HepG2 (cell line): ENCODE measurements at regions of chr14 and their contacts with region 1.

Region 1: DNA sequence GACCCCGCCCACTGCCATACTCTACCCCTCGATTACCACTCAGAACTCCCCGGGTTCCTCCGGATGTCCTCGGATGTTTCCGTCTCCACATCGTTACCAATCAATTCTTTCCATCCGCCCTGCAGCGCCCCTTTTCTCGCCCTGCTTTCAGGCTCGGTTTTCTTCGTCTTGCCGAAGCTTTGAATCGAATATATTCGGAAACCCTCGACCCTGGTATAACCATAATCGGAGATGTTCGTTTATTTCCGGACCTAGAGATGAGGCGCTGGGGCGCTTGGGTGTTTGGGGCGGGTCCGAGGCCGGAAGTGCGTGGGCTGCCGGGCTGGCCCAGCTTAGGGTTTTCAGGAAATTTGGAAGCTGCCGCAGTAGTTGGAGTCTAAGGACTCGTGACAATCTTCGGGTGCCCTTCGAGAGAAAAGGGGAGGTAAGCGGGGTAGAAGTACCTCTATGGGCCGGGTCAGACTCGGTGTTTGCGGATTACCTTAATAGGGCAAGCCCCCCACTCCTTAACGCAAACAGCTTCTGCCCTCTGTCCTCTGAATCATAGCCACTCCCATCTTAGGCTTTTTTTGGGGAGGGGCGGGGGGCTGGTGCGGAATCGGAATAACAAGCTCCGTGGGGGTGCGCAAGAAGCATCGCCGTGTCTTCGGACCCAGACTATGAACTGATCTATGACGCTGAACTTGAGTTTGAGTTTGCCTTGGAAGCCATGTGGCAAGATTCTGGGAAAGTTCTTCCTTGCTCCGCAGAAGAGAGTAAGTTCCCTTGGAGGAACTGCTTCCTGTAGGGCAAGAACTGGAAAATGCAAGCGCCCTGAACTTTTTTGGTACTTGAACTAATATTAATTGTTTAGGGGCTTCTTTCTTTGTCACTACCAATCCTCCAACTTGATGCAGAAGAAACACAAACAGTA is at the start of gene C14orf119:
- DNase-seq: peak; percentile 100
- ATAC-seq: peak; percentile 92
- H3K4me3 ChIP-seq: peak within 1 kb of the TSS; percentile 71 to 96 (median 95)
- H3K27ac ChIP-seq: peak within 1 kb of the TSS; percentile 89
- H3K4me1 ChIP-seq: peaks cover 37% of the 10 kb centered on the region
- H3K27me3 ChIP-seq: no peaks in the 10 kb centered on the region; a peak in 1 of 5 replicates
- CTCF ChIP-seq: peak; percentile 16; the same call in 1 of the 2 replicates
- EP300 ChIP-seq: no peak; a peak in 2 of 4 replicates
- POLR2A ChIP-seq: peak in 1 of 2 experiments; percentile 55; a peak in 2 of 4 replicates
- RAD21 ChIP-seq: peak; percentile 42; the same call in 1 of the 2 replicates
- total RNA-seq, gene C14orf119: 206 and 299 TPM in 2 replicates

Region 2: DNA sequence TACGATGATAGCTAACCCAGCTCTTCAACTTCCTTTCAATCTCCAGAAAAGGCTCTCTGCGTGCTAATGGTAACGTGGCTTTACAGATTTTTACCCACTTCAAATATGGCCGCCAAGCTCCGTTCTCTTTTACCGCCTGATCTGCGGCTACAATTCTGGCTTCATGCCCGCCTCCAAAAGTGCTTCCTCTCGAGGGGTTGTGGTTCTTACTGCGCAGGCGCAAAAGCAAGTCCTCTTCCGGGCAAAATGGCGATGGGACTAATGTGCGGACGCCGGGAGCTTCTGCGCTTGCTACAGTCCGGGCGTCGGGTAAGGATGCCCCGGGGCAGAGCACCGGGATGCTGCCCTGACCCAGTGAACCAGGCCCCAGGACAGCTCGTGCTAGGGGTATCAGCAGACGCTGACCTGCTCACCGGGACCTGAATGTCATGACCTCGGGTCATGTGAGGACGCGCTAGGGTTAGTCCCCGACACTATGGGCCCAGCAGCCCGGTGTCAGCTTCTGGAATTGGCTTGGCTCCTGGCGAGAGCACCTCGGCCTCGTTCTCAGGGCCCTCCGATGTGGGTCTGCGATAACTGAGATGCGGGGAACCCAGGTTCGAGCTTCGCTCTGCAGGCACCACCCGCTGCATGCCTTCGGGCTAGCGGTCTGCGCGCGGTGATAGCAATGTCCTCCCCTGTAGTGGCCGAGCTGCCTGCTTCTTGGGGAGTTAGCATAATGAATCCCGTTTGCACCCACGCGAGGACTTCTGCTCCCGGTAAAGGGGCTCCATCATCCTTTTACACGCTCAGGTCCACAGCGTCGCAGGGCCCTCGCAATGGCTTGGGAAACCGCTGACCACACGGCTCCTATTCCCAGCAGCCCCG is 328.8 kb before region 1 on chr14 and contains the start of gene OXA1L:
- CTCF ChIA-PET with region 1: no interaction called
- POLR2A ChIA-PET with region 1: interaction called, 20 read pairs
- in situ Hi-C with region 1: no loop called
- intact Hi-C with region 1: no loop called
- DNase-seq: peak; percentile 100
- ATAC-seq: peak; percentile 90
- H3K4me3 ChIP-seq: peak within 1 kb of the TSS; percentile 72 to 96 (median 83)
- H3K27ac ChIP-seq: peak within 1 kb of the TSS; percentile 74
- H3K4me1 ChIP-seq: peaks cover 22% of the 10 kb centered on the region
- H3K27me3 ChIP-seq: no peaks in the 10 kb centered on the region; a peak in 1 of 5 replicates
- CTCF ChIP-seq: peak; percentile 37
- EP300 ChIP-seq: peak in 1 of 2 experiments; percentile 52; a peak in 1 of 4 replicates
- POLR2A ChIP-seq: peak; percentile 98
- RAD21 ChIP-seq: peak; percentile 13
- total RNA-seq, gene OXA1L: 216 and 230 TPM in 2 replicates

Region 3: DNA sequence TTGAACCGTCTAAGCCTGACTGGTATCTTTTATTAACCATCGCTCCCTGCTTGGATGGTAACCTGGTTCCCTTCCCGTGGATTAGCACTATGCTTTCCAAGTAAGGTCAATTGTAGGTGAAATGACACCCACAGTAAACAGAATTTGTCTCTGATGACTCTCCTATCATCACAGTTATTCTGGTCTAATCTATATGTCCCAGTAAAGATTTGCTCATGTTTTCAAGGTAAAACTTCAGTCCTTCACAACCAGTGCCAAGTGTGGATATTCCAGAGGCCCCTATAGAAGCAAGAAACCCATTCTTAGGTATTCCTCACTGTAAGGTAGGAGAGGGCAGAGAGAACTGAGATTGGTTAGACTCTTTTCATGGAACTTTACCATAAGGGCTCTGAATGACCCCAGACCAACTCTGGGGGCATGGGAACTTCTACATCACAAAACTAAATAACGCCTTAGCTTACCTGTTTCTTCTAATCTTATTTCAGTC is 128.6 kb before region 1 on chr14:
- CTCF ChIA-PET with region 1: no interaction called
- POLR2A ChIA-PET with region 1: interaction called, 10 read pairs
- in situ Hi-C with region 1: no loop called
- intact Hi-C with region 1: no loop called
- DNase-seq: no peak
- ATAC-seq: peak; percentile 32
- H3K4me3 ChIP-seq: no peak overlapping the region
- H3K27ac ChIP-seq: peak overlapping the region; percentile 59
- H3K4me1 ChIP-seq: peaks cover 34% of the 10 kb centered on the region
- H3K27me3 ChIP-seq: no peaks in the 10 kb centered on the region
- CTCF ChIP-seq: no peak
- EP300 ChIP-seq: no peak
- POLR2A ChIP-seq: peak in 1 of 2 experiments; percentile 60; a peak in 3 of 4 replicates
- RAD21 ChIP-seq: no peak

Region 4: GRCh38 chr14:23006544-23007419 is 88.7 kb before region 1 on chr14:
- CTCF ChIA-PET with region 1: no interaction called
- POLR2A ChIA-PET with region 1: interaction called, 70 read pairs
- in situ Hi-C with region 1: no loop called
- intact Hi-C with region 1: no loop called
- DNase-seq: peak; percentile 100
- ATAC-seq: peak; percentile 97
- H3K4me3 ChIP-seq: peak overlapping the region; percentile 68 to 82 (median 80)
- H3K27ac ChIP-seq: peak overlapping the region; percentile 86
- H3K4me1 ChIP-seq: peaks cover 52% of the 10 kb centered on the region
- H3K27me3 ChIP-seq: no peaks in the 10 kb centered on the region; a peak in 1 of 5 replicates
- CTCF ChIP-seq: peak; percentile 76
- EP300 ChIP-seq: peak in 1 of 2 experiments; percentile 9; a peak in 3 of 4 replicates
- POLR2A ChIP-seq: peak; percentile 96 to 98
- RAD21 ChIP-seq: peak; percentile 91

Region 5: GRCh38 chr14:23068476-23069412 is 26.7 kb before region 1 on chr14:
- CTCF ChIA-PET with region 1: interaction called, 20 read pairs
- POLR2A ChIA-PET with region 1: interaction called, 146 read pairs
- in situ Hi-C with region 1: no loop called
- intact Hi-C with region 1: loop called (anchors 1 kb)
- DNase-seq: peak; percentile 98
- ATAC-seq: peak; percentile 79
- H3K4me3 ChIP-seq: no peak overlapping the region
- H3K27ac ChIP-seq: peak overlapping the region; percentile 5
- H3K4me1 ChIP-seq: peaks cover 42% of the 10 kb centered on the region
- H3K27me3 ChIP-seq: no peaks in the 10 kb centered on the region; a peak in 1 of 5 replicates
- CTCF ChIP-seq: peak; percentile 99
- EP300 ChIP-seq: no peak; a peak in 1 of 4 replicates
- POLR2A ChIP-seq: peak in 1 of 2 experiments; percentile 24; a peak in 2 of 4 replicates
- RAD21 ChIP-seq: peak; percentile 94

Region 6: GRCh38 chr14:23286020-23286905 is 190.8 kb after region 1 on chr14 and contains the start of gene HOMEZ:
- CTCF ChIA-PET with region 1: no interaction called
- POLR2A ChIA-PET with region 1: interaction called, 25 read pairs
- in situ Hi-C with region 1: no loop called
- intact Hi-C with region 1: loop called (anchors 1 kb)
- DNase-seq: peak; percentile 100
- ATAC-seq: peak; percentile 99
- H3K4me3 ChIP-seq: peak within 1 kb of the TSS; percentile 83 to 96 (median 83)
- H3K27ac ChIP-seq: peak within 1 kb of the TSS; percentile 83
- H3K4me1 ChIP-seq: peaks cover 26% of the 10 kb centered on the region
- H3K27me3 ChIP-seq: no peaks in the 10 kb centered on the region; a peak in 1 of 5 replicates
- CTCF ChIP-seq: peak; percentile 58
- EP300 ChIP-seq: peak in 1 of 2 experiments; percentile 48; a peak in 2 of 4 replicates
- POLR2A ChIP-seq: peak in 1 of 2 experiments; percentile 93; a peak in 2 of 4 replicates
- RAD21 ChIP-seq: no peak; the same call in 1 of the 2 replicates
- total RNA-seq, gene HOMEZ: 13.6 and 14.5 TPM in 2 replicates